H1 (cell line): ENCODE measurements at regions of chr3 and their contacts with region 1.

Region 1: GRCh38 chr3:107676469-107677309 is 153.9 kb downstream of the BBX start:
- DNase-seq: no peak
- H3K4me3 ChIP-seq: no peak overlapping the region
- H3K27ac ChIP-seq: no peak overlapping the region
- H3K4me1 ChIP-seq: no peaks in the 10 kb centered on the region
- H3K27me3 ChIP-seq: no peaks in the 10 kb centered on the region
- CTCF ChIP-seq: peak in 1 of 3 experiments; percentile 34; a peak in 2 of 4 replicates
- EP300 ChIP-seq: no peak
- POLR2A ChIP-seq: no peak
- RAD21 ChIP-seq: peak in 1 of 2 experiments; percentile 42; a peak in 3 of 4 replicates

Region 2: GRCh38 chr3:107643038-107643883 is 33.4 kb before region 1 on chr3:
- CTCF ChIA-PET with region 1: interaction called, 12 read pairs
- POLR2A ChIA-PET with region 1: no interaction called
- DNase-seq: peak in 1 of 2 experiments; percentile 58
- H3K4me3 ChIP-seq: no peak overlapping the region
- H3K27ac ChIP-seq: no peak overlapping the region
- H3K4me1 ChIP-seq: peaks cover 6 to 12% (median 10%) of the 10 kb centered on the region in 4 experiments; a peak in 6 of 7 replicates
- H3K27me3 ChIP-seq: no peaks in the 10 kb centered on the region
- CTCF ChIP-seq: peak; percentile 18 to 46 (median 43); a peak in 3 of 4 replicates
- EP300 ChIP-seq: no peak
- POLR2A ChIP-seq: no peak
- RAD21 ChIP-seq: peak; percentile 37 to 50

Region 3: GRCh38 chr3:107690522-107691138 is 13.9 kb after region 1 on chr3:
- CTCF ChIA-PET with region 1: interaction called, 69 read pairs
- POLR2A ChIA-PET with region 1: no interaction called
- DNase-seq: no peak
- H3K4me3 ChIP-seq: no peak overlapping the region
- H3K27ac ChIP-seq: no peak overlapping the region
- H3K4me1 ChIP-seq: no peaks in the 10 kb centered on the region
- H3K27me3 ChIP-seq: no peaks in the 10 kb centered on the region
- CTCF ChIP-seq: peak in 2 of 3 experiments; percentile 22 to 43; a peak in 2 of 4 replicates
- EP300 ChIP-seq: no peak
- POLR2A ChIP-seq: no peak
- RAD21 ChIP-seq: peak in 1 of 2 experiments; percentile 18; a peak in 2 of 4 replicates

Region 4: DNA sequence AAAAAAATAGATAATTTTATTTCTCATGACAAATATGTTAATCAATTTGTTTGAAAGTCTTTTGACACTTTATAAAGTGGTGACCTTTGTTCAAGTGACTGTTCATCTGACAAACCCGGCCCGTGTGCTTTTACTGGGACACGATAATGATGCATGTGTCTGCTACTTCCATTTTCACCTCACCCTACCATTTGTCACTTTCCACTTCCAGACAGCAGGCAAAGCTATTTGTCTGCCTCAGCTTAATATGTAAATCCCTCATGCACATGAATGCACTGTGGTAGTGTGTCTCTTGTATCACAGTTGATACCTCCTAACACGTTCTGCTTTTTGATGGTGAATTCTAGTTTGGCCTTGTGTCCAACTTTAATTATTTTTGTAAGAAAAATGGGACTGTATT is 50.4 kb after region 1 on chr3:
- CTCF ChIA-PET with region 1: interaction called, 31 read pairs
- POLR2A ChIA-PET with region 1: no interaction called
- DNase-seq: no peak
- H3K4me3 ChIP-seq: no peak overlapping the region
- H3K27ac ChIP-seq: no peak overlapping the region
- H3K4me1 ChIP-seq: peaks cover 0 to 2% (median 1%) of the 10 kb centered on the region in 4 experiments; a peak in 1 of 7 replicates
- H3K27me3 ChIP-seq: no peaks in the 10 kb centered on the region
- CTCF ChIP-seq: no peak
- EP300 ChIP-seq: no peak
- POLR2A ChIP-seq: no peak
- RAD21 ChIP-seq: no peak

Region 5: DNA sequence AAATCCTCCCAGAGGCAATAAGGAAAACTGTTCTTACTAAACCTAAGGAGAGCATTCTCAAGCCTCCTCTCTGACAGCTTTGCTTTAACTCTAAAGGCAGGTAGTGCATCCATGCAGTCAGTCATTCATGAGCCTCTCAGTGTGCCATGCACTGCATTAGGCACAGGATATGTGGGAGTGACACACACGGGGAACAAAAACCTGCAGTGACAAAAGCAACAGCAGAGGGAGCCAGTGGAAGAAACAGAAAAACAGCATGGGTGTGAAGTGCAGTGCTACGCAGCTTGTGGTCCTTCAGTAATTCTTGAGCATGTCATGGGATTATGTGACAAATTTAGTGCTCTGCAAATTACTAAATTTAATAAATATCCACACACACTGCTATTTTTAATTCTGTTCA is 76.8 kb after region 1 on chr3:
- CTCF ChIA-PET with region 1: interaction called, 29 read pairs
- POLR2A ChIA-PET with region 1: no interaction called
- DNase-seq: no peak
- H3K4me3 ChIP-seq: no peak overlapping the region
- H3K27ac ChIP-seq: no peak overlapping the region
- H3K4me1 ChIP-seq: no peaks in the 10 kb centered on the region
- H3K27me3 ChIP-seq: no peaks in the 10 kb centered on the region
- CTCF ChIP-seq: peak; percentile 47 to 71 (median 53)
- EP300 ChIP-seq: no peak
- POLR2A ChIP-seq: no peak
- RAD21 ChIP-seq: peak; percentile 42 to 46